B cell (primary cell): ENCODE measurements at regions of chr6 and their contacts with region 1.

Region 1: DNA sequence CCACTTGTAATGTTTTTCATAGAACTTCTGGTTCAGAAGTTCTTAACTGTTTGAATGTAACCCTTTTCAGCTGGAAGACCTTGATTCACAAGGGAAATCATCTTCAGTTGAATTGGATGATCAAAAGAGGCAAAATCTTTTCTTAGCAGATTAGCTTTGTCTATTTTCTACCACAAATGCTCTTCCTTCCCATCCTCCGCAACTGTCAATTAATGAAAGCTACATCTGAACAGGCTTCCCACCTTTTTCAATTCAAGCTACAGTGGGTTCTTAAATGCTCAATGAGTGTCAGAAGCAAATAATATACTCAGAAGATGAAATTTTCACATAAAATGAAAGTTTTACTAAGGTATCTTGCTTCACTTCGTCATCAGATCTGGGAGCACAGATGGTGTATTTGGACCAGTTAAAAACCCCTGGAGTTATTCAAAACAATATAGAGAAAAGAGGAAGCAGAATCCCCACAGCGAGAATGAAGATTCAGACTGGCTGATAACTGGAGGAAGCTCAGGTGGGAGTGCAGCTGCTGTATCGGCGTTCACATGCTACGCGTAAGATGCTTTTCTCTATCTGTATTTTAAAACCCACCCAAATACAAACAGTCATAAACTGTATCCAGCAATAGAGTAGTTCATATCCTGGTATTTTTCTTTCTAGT is 19.4 kb downstream of the QRSL1 start:
- DNase-seq: peak; percentile 76
- ATAC-seq: peak; percentile 96
- H3K4me3 ChIP-seq: peak overlapping the region; percentile 38 to 87 (median 58)
- H3K4me3 Mint-ChIP-seq: peak overlapping the region; percentile 87
- H3K27ac ChIP-seq: peak overlapping the region; percentile 82 to 94
- H3K27ac Mint-ChIP-seq: peak overlapping the region; percentile 97
- H3K4me1 ChIP-seq: peaks cover 19 to 24% of the 10 kb centered on the region in 2 donors
- H3K4me1 Mint-ChIP-seq: peaks cover 46% of the 10 kb centered on the region
- H3K27me3 ChIP-seq: no peaks in the 10 kb centered on the region
- H3K27me3 Mint-ChIP-seq: no peaks in the 10 kb centered on the region
- CTCF ChIP-seq: no peak

Region 2: DNA sequence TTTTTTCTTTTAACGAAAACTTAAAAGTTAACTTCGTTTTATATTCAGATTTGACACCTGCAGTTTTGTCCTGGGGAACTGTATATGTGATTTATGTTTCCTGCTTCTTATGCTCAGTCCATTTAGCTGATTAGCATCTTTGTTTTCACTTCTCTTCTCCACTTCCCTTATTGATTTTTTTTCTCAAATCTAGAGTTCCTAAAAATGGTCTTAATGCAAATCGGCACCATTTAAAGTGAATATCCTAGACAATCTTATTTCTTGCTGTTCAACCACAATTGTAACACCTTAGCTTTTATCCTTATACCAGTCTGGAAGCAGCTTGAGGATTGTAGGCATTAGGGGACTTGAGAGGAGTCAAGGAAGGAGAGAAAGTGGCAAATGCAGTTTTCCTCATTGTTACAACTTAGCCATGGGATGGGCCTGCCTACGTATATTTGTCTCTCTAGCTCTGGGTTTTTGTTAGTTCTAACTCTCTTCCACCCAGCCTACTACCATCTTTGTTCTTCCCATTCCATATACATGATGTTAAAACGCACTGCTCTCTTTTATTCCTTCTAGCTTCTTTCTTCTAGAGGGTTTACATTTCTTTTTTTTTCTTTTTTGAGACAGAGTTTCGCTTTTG is 11.0 kb before region 1 on chr6:
- CTCF ChIA-PET with region 1: interaction called, 5 read pairs
- POLR2A ChIA-PET with region 1: interaction called, 6 read pairs
- intact Hi-C with region 1: loop called (anchors 1 kb)
- DNase-seq: peak; percentile 79
- ATAC-seq: peak; percentile 85
- H3K4me3 ChIP-seq: peak overlapping the region; percentile 25 to 59 (median 35)
- H3K4me3 Mint-ChIP-seq: peak overlapping the region; percentile 74
- H3K27ac ChIP-seq: peak overlapping the region; percentile 81 to 89
- H3K27ac Mint-ChIP-seq: peak overlapping the region; percentile 95
- H3K4me1 ChIP-seq: peaks cover 64 to 68% of the 10 kb centered on the region in 2 donors
- H3K4me1 Mint-ChIP-seq: peaks cover 64% of the 10 kb centered on the region
- H3K27me3 ChIP-seq: no peaks in the 10 kb centered on the region
- H3K27me3 Mint-ChIP-seq: no peaks in the 10 kb centered on the region
- CTCF ChIP-seq: no peak

Region 3: GRCh38 chr6:106666290-106667021 is 17.7 kb after region 1 on chr6:
- CTCF ChIA-PET with region 1: interaction called, 5 read pairs
- POLR2A ChIA-PET with region 1: interaction called, 4 read pairs
- intact Hi-C with region 1: loop called (anchors 1 kb)
- DNase-seq: peak; percentile 86
- ATAC-seq: peak; percentile 99
- H3K4me3 ChIP-seq: peak overlapping the region in 2 of 5 experiments; percentile 2 to 29
- H3K4me3 Mint-ChIP-seq: peak overlapping the region; percentile 80
- H3K27ac ChIP-seq: peak overlapping the region; percentile 30 to 81
- H3K27ac Mint-ChIP-seq: peak overlapping the region; percentile 93
- H3K4me1 ChIP-seq: peaks cover 49 to 61% of the 10 kb centered on the region in 2 donors
- H3K4me1 Mint-ChIP-seq: peaks cover 64% of the 10 kb centered on the region
- H3K27me3 ChIP-seq: no peaks in the 10 kb centered on the region
- H3K27me3 Mint-ChIP-seq: no peaks in the 10 kb centered on the region
- CTCF ChIP-seq: no peak

Region 4: DNA sequence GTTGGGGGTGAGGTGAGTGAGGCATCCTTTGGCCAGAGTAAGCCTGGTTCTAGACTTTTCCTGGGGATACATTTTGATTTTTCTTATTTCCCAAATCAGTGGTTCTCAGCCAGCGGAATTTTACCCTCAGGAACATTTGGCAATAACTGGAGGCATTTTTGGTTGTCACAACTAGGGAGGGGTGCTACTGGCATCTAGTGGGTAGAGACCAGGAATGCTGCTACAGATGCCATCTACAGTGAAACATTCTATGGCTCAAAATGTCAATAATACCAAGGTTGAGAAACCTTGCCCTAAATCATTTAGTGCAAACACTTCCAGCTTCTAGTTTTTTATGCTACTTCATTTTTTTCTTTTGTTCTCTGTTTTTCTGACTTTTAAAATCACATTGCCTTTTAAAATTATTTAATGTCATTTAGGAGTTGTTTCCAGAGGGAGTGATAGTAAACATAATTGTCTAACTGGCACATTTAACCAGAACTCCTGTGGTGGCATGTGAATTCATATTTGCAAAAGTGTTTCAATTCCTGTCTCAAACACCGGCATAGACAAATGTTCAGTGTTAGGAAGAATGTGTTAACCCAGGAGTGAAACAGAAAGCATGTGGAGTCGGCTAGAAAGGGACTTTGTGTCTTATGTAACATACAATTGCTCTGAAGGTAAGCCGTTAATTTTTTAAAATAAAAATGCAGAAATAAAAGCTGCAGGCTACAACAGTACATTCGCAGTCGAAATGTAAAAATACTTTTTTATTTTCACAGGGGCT is 39.6 kb after region 1 on chr6:
- CTCF ChIA-PET with region 1: interaction called, 12 read pairs
- POLR2A ChIA-PET with region 1: no interaction called
- intact Hi-C with region 1: no loop called
- DNase-seq: peak; percentile 32
- ATAC-seq: peak; percentile 33
- H3K4me3 ChIP-seq: peak overlapping the region in 1 of 5 experiments; percentile 1
- H3K4me3 Mint-ChIP-seq: peak overlapping the region; percentile 29
- H3K27ac ChIP-seq: no peak overlapping the region
- H3K27ac Mint-ChIP-seq: peak overlapping the region; percentile 26
- H3K4me1 ChIP-seq: peaks cover 19 to 30% of the 10 kb centered on the region in 2 donors
- H3K4me1 Mint-ChIP-seq: peaks cover 32% of the 10 kb centered on the region
- H3K27me3 ChIP-seq: no peaks in the 10 kb centered on the region
- H3K27me3 Mint-ChIP-seq: no peaks in the 10 kb centered on the region
- CTCF ChIP-seq: no peak